Activated CD4-positive, alpha-beta T cell treated with anti-CD3 and anti-CD28 coated beads, Interleukin-2, amount 10 ng/mL, durations not matched to agents 24 days and 14 days (primary cell): ENCODE measurements at regions of chr4 and their contacts with region 1.

Region 1: GRCh38 chr4:2008875-2009703 is at the start of gene NELFA:
- DNase-seq: peak; percentile 98
- H3K4me3 Mint-ChIP-seq: peak within 1 kb of the TSS; percentile 91
- H3K27ac Mint-ChIP-seq: peak within 1 kb of the TSS; percentile 91
- H3K4me1 Mint-ChIP-seq: peaks cover 26% of the 10 kb centered on the region
- H3K27me3 Mint-ChIP-seq: peaks cover 10% of the 10 kb centered on the region
- total RNA-seq, gene NELFA: 51.1 and 57.4 TPM in 2 replicates

Region 2: GRCh38 chr4:1887052-1887451 is 122.0 kb before region 1 on chr4:
- intact Hi-C with region 1: no loop called
- DNase-seq: no peak
- H3K4me3 Mint-ChIP-seq: no peak overlapping the region
- H3K27ac Mint-ChIP-seq: peak overlapping the region; percentile 82
- H3K4me1 Mint-ChIP-seq: peaks cover 32% of the 10 kb centered on the region
- H3K27me3 Mint-ChIP-seq: no peaks in the 10 kb centered on the region

Region 3: DNA sequence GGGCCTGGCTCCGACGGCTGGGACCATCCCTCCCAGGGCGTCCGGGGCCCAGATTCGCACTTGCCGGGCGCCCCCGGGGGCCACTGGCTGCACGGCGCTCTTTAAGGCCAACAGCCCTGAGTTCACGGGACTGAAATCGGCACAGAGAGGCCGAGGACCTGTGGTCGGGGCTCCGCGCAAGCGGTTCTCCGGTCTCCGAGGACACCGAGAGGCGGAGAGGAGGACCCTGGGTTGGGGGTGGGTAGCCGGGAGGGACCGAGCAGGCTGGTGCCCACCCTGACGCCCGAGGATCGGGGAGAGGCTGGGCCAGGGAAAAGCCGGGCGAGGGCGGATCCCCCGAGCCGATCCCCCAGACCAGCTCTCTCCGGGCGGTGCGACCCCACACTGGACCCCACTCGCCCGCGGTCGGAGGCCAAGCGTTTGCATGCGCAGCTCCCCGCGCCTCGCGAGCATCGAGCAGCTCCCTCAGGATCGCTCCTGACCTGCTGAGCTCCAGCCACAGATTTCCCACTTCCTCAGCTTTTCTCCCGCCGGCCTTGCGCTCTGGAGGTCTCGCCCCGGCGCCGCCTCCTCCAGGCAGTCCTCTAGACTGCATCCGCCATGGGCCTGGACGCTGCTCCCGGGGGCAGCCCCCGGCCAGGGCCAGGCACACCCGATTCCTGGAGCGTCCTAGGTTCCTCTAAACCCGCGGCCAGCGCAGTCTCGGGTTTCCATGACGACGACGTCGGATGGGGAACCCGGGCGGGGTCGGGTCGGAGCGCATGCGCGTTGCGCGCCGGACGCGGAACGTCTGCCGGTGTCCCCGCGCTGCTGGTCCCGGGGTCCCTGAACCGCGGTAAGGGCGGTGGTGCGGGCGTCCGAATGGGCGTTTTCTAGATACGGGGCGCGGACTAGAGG is 32.4 kb after region 1 on chr4:
- intact Hi-C with region 1: loop called (anchors 1 kb)
- DNase-seq: peak; percentile 98
- H3K4me3 Mint-ChIP-seq: peak overlapping the region; percentile 86
- H3K27ac Mint-ChIP-seq: peak overlapping the region; percentile 58
- H3K4me1 Mint-ChIP-seq: peaks cover 7% of the 10 kb centered on the region
- H3K27me3 Mint-ChIP-seq: peaks cover 30% of the 10 kb centered on the region

Region 4: DNA sequence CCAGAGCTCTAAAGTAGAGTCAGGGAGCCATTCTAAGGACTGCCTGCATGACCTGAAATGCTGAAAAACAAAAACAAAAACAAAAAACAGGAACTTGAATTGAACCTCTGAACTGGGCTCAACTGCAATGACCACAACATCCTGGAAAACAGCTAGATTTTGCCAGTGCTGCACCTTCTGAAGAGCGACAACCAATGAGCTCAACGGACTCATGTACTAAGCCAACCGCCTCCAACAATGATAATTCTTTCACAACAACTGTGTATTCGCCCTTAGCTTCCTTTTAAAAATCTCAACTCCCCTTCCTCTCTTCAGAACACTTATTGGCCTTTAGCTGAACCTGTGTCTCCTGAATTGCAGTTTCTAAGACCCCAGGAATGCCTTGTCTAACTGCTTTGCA is 163.1 kb after region 1 on chr4:
- intact Hi-C with region 1: loop called (anchors 5 kb)
- DNase-seq: peak; percentile 88
- H3K4me3 Mint-ChIP-seq: peak overlapping the region; percentile 78
- H3K27ac Mint-ChIP-seq: peak overlapping the region; percentile 91
- H3K4me1 Mint-ChIP-seq: peaks cover 72% of the 10 kb centered on the region
- H3K27me3 Mint-ChIP-seq: no peaks in the 10 kb centered on the region

Region 5: DNA sequence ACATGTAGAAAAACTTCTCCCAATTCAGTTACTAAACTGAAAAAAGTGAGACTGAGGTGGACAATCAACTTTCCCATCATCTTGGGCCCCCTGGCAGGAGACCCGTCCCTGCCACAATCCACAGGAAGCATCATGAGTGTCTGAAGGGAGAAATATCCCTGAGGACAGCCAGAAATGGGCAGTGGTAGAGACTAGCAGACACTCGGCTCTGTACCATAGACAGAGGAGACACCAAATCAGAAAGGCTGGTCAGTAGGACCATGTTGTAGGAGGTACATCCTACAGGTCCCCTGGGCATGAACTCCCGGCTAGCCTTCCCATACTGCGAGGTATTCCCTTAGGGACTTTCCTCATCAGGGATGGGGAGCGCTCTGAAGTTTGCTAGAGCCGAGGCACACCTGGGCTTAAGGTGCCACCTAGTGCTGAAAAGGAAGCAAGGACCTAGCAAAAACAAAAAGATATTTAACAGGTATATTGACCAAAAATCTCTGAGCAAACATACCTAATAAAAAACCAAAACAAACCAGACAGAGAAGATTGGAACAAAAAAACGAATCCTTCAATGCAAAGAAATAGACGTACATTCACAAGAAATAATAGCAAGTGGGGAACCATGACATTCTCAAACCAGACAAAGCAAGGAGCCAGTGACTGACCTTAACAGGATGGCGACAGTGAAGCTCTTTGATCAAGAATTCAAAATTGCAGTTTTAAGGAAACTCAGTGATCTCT is 177.2 kb after region 1 on chr4:
- intact Hi-C with region 1: loop called (anchors 5 kb)
- DNase-seq: peak; percentile 72
- H3K4me3 Mint-ChIP-seq: no peak overlapping the region
- H3K27ac Mint-ChIP-seq: no peak overlapping the region
- H3K4me1 Mint-ChIP-seq: peaks cover 4% of the 10 kb centered on the region
- H3K27me3 Mint-ChIP-seq: no peaks in the 10 kb centered on the region

Region 6: GRCh38 chr4:2418650-2419571 is 409.8 kb after region 1 on chr4 and contains the start of gene CFAP99:
- intact Hi-C with region 1: loop called (anchors 10 kb)
- DNase-seq: peak; percentile 98
- H3K4me3 Mint-ChIP-seq: peak within 1 kb of the TSS; percentile 91
- H3K27ac Mint-ChIP-seq: peak within 1 kb of the TSS; percentile 86
- H3K4me1 Mint-ChIP-seq: peaks cover 35% of the 10 kb centered on the region
- H3K27me3 Mint-ChIP-seq: peaks cover 59% of the 10 kb centered on the region
- total RNA-seq, gene CFAP99: not detected in 2 replicates